B cell (primary cell): ENCODE measurements at regions of chr14 and their contacts with region 1.

Region 1: DNA sequence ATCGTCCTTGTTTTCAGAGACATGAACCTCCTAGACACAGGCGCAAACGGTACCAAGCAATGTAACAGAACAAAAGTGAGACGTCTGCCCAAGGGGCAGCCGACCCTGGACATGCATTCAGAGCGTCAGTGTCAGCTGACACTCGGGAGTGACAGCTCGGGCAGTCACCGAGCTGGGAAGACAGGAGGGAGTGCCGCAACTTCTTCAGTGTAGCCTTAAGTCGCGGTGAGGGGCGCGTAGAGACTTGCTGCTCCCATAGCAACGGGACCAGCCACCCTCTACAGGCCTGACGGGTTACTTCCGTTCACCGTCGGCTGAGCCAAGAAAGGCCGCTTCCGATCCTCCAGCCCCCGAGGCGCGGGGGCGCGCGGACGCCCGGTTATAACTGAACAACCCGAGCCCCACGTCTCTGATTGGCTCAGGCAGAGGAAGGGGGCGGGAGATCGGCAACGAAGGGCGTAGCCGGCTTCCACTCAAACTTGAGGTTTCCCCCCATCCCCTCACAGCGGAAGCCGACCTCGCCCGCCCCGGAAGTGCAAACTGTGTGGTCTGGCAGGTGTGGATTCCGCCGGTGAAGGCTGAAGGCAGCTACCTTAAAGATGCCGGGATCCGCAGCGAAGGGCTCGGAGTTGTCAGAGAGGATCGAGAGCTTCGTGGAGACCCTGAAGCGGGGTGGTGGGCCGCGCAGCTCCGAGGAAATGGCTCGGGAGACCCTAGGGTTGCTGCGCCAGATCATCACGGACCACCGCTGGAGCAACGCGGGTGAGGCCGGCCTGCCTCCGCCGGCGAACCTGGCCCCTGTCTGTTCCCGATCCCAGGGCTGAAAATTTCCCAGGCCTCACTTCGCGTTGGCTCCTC is at the start of gene EIF2B2:
- DNase-seq: peak; percentile 99
- ATAC-seq: peak; percentile 97
- H3K4me3 ChIP-seq: peak within 1 kb of the TSS; percentile 62 to 92 (median 73)
- H3K4me3 Mint-ChIP-seq: peak within 1 kb of the TSS; percentile 98
- H3K27ac ChIP-seq: peak within 1 kb of the TSS; percentile 88 to 95
- H3K27ac Mint-ChIP-seq: peak within 1 kb of the TSS; percentile 88
- H3K4me1 ChIP-seq: peaks cover 17 to 19% of the 10 kb centered on the region in 2 donors
- H3K4me1 Mint-ChIP-seq: peaks cover 29% of the 10 kb centered on the region
- H3K27me3 ChIP-seq: no peaks in the 10 kb centered on the region
- H3K27me3 Mint-ChIP-seq: no peaks in the 10 kb centered on the region
- CTCF ChIP-seq: peak; percentile 23
- total RNA-seq, gene EIF2B2: 25.5 and 31.1 TPM in 2 replicates

Region 2: DNA sequence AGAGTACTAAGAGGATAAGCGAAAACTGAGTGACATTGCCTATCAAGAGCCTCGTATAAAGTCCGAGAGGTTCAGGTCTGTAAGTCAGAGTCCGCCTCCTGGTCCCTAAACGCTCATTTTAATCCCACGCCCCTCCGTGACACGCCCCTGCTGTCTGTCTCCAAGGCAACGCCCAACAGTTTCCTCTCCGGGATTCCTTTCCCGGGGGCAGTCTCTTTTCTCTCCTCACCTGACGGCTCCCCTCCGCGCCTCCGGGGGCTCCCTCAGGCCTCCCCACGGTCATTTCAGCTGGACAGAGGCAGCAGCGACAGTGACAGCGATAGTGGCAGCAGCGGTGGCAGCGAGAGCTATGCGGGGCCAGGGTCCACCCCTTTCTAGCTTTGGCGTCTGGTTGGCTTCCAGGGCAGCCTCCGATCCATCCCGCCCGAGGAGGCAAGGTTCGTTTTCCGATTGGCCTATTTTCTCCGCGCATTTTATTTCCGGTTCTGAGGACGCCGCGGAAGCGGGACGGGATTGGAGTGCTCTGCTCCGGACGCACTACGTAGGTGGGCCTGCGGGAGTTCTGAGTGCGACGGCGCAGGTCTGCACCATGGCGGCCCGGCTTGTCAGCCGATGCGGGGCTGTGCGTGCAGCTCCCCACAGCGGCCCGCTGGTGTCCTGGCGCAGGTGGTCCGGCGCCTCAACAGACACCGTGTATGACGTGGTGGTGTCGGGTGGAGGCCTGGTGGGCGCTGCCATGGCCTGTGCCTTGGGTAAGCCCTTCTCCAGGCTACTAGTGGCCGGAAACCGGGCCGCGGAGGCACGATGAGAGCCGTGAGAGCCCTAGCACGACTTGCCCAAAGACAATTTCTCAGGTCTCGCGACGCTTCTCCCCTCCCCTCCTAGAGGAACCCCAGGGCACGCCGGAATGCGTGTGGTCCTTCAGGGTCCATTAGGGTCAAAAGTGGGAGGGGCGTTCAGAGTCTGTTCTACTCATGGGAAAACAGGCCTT is 1052.6 kb before region 1 on chr14 and contains the starts of genes COQ6 and FAM161B:
- CTCF ChIA-PET with region 1: no interaction called
- POLR2A ChIA-PET with region 1: no interaction called
- intact Hi-C with region 1: loop called (anchors 10 kb)
- DNase-seq: peak; percentile 96
- ATAC-seq: peak; percentile 93
- H3K4me3 ChIP-seq: peak within 1 kb of the TSS; percentile 63 to 94 (median 89)
- H3K4me3 Mint-ChIP-seq: peak within 1 kb of the TSS; percentile 100
- H3K27ac ChIP-seq: peak within 1 kb of the TSS; percentile 78 to 96
- H3K27ac Mint-ChIP-seq: peak within 1 kb of the TSS; percentile 95
- H3K4me1 ChIP-seq: peaks cover 11 to 12% of the 10 kb centered on the region in 2 donors
- H3K4me1 Mint-ChIP-seq: peaks cover 20% of the 10 kb centered on the region
- H3K27me3 ChIP-seq: no peaks in the 10 kb centered on the region
- H3K27me3 Mint-ChIP-seq: no peaks in the 10 kb centered on the region
- CTCF ChIP-seq: peak; percentile 11
- total RNA-seq, gene COQ6: 34.1 and 38.2 TPM in 2 replicates
- total RNA-seq, gene FAM161B: 5.9 and 6.4 TPM in 2 replicates

Region 3: DNA sequence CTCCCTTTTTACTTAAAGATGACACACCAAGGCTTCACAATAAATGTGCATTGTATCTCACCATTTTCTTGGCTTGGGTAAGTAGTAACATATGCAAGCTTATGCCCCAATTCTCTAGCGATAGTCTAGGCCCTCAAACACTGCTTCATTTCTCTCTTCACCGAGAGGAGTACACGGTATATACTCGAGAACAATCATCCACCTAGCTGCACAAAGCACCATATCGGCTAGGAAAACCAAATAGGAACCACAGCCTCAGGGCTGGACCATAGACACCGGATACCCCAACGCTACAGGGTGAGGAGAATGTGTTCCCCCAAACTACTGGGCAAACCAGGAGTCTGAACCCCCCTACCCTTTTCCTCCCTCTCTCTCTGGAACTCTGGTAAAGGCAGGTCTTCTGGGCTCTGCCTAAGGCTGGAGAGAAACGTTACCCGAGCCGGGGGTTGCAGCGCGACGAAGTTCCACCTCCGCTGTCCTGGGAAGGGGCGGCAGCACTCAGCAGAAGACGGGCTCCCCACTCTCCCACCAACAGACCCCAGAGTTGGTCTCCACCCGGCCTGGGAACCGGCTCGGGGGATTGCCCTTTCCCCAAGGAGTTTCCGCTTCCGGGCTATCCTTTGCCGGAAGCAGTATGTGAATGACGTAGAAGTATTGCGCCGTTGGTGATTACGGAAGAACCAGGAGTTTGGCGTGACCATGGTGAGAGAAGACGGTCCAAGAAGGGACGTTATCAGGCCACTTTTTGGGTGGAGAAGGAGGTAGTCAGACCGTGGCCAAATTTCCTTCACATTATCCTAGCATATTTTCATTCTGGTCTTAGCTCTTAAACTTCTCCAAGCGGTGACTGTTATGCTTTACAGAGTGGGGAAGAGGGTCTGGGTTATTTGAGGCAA is 289.9 kb before region 1 on chr14 and contains the starts of genes AREL1 and FCF1:
- CTCF ChIA-PET with region 1: no interaction called
- POLR2A ChIA-PET with region 1: no interaction called
- intact Hi-C with region 1: loop called (anchors 5 kb)
- DNase-seq: peak; percentile 91
- ATAC-seq: peak; percentile 94
- H3K4me3 ChIP-seq: peak within 1 kb of the TSS; percentile 64 to 97 (median 87)
- H3K4me3 Mint-ChIP-seq: peak within 1 kb of the TSS; percentile 88
- H3K27ac ChIP-seq: peak within 1 kb of the TSS; percentile 83 to 90
- H3K27ac Mint-ChIP-seq: peak within 1 kb of the TSS; percentile 85
- H3K4me1 ChIP-seq: peaks cover 18 to 20% of the 10 kb centered on the region in 2 donors
- H3K4me1 Mint-ChIP-seq: peaks cover 38% of the 10 kb centered on the region
- H3K27me3 ChIP-seq: no peaks in the 10 kb centered on the region
- H3K27me3 Mint-ChIP-seq: no peaks in the 10 kb centered on the region
- CTCF ChIP-seq: no peak
- total RNA-seq, gene AREL1: 39.4 and 44.4 TPM in 2 replicates
- total RNA-seq, gene FCF1: 40.6 and 41.6 TPM in 2 replicates

Region 4: DNA sequence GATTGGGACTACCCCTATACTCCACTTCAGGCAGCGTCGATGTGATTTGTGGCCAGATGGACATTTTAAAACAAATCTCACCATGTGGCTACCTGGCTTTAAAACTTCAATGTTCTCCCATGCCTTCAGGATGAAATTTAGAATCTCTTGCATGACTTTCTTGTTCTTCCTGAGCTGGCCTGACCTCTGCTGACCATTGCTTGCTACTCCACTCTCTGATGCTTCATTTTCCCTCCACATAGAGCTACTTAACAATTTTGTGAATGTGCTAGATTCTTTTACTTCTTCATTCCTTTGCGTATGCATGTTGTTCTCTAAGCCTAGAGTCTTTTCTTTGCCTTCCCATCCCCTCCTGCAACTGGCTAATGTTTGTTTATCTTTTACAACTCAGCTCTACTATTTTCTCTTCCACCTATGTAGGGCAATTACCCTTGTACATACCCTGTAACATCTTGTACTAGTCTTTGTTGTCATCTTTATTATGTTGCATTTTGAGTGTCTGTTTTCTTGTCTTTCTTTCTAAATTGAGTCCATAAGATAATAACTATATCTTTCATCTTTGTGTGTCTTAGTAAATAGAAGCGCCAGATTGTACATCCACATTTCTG is 198.3 kb before region 1 on chr14:
- CTCF ChIA-PET with region 1: no interaction called
- POLR2A ChIA-PET with region 1: no interaction called
- intact Hi-C with region 1: no loop called
- DNase-seq: peak; percentile 33
- ATAC-seq: no peak
- H3K4me3 ChIP-seq: no peak overlapping the region
- H3K4me3 Mint-ChIP-seq: no peak overlapping the region
- H3K27ac ChIP-seq: no peak overlapping the region
- H3K27ac Mint-ChIP-seq: no peak overlapping the region
- H3K4me1 ChIP-seq: no peaks in the 10 kb centered on the region
- H3K4me1 Mint-ChIP-seq: no peaks in the 10 kb centered on the region
- H3K27me3 ChIP-seq: no peaks in the 10 kb centered on the region
- H3K27me3 Mint-ChIP-seq: no peaks in the 10 kb centered on the region
- CTCF ChIP-seq: peak; percentile 58

Region 5: DNA sequence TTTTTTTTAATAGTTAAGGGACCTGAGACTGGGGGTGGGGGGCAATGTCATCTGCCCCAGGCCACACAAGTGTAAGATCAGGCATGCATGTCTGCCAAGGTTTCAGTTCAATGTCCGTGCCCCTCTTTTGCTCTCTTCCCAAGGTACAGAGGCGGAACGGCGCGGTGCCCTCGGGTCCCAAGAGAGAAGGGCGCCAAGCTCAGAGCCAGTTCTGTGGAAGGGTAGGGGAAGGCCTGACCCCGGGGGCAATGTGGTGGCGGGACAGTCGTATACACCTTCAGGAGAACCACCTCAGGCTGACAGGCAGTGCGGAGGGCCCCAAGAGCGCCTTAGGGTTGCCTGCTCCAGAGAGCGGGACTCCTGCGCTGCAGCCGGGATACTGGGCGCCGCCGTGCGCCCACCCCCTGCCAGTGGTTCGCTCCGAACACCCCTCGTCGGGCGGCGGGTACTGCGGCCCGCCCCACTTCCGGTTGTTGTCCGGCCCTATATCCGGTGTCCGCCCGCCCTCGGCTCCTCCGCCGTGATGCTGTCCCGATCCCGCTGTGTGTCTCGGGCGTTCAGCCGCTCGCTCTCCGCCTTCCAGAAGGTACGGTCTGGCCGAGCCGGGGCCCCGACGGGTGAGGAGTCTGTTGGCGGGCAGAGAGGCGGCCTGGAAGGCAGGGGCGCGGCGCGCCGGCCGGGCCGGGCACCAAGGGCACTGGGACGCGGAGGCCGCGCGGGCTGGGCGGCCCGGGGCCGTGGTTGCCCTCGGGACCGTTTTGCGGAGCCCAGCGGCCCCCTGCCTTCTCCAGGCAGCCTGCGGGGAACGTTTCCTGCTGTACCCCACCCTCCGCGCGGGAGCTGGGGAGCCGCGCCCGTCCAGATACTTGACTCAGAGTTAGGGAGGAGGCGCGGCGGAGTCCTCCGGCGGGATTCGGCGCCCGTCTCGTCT is 120.9 kb before region 1 on chr14 and contains the start of gene DLST:
- CTCF ChIA-PET with region 1: no interaction called
- POLR2A ChIA-PET with region 1: no interaction called
- intact Hi-C with region 1: loop called (anchors 1 kb)
- DNase-seq: peak; percentile 93
- ATAC-seq: peak; percentile 83
- H3K4me3 ChIP-seq: peak within 1 kb of the TSS; percentile 76 to 94 (median 79)
- H3K4me3 Mint-ChIP-seq: peak within 1 kb of the TSS; percentile 100
- H3K27ac ChIP-seq: peak within 1 kb of the TSS; percentile 80 to 89
- H3K27ac Mint-ChIP-seq: peak within 1 kb of the TSS; percentile 99
- H3K4me1 ChIP-seq: peaks cover 29 to 33% of the 10 kb centered on the region in 2 donors
- H3K4me1 Mint-ChIP-seq: peaks cover 57% of the 10 kb centered on the region
- H3K27me3 ChIP-seq: no peaks in the 10 kb centered on the region
- H3K27me3 Mint-ChIP-seq: no peaks in the 10 kb centered on the region
- CTCF ChIP-seq: no peak
- total RNA-seq, gene DLST: 89.5 and 100 TPM in 2 replicates

Region 6: DNA sequence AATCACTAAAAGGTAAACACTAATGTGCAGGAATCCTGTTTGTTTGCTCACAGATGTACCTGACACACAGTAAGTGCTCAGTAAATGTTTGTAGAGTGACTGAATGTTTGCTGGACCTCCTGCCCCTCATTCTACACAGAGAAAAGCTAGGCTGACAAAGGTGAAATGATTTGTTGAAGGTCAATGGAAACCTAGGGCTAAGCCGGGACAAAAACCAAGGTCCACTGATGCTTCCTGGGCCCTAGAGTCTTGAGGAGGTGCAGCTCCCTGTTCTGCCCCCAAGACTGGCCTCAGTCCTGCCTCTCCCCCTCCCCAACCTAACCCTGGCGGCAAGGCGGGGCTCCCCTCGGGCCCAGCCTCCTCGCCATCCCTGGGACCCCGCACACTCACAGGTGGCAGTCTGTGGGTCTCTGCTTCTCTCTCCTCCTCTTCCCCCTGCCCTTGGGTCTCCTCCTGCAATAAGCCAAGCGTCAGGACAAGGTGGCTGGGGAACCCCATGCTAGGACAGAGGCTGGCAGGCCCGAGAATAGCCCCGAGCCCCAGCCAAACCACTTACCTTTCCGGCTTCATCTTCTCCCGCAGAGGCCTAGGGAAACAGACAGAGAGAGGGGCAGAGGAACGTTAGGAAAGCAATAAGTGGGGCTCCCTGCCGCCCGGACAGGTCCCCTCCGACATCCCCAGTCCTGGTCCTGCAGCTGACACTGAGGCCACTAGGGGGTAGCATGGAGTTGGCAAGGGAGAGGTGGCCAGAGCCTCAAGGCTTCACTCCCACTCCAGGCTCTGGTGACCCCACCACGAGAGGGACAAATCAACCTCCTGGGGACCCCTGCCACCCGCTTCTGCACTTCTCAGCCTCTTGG is 56.6 kb before region 1 on chr14:
- CTCF ChIA-PET with region 1: interaction called, 3 read pairs
- POLR2A ChIA-PET with region 1: interaction called, 4 read pairs
- intact Hi-C with region 1: loop called (anchors 1 kb)
- DNase-seq: peak; percentile 80
- ATAC-seq: peak; percentile 71
- H3K4me3 ChIP-seq: no peak overlapping the region
- H3K4me3 Mint-ChIP-seq: peak overlapping the region; percentile 32
- H3K27ac ChIP-seq: no peak overlapping the region
- H3K27ac Mint-ChIP-seq: peak overlapping the region; percentile 72
- H3K4me1 ChIP-seq: peaks cover 31 to 35% of the 10 kb centered on the region in 2 donors
- H3K4me1 Mint-ChIP-seq: peaks cover 34% of the 10 kb centered on the region
- H3K27me3 ChIP-seq: no peaks in the 10 kb centered on the region
- H3K27me3 Mint-ChIP-seq: no peaks in the 10 kb centered on the region
- CTCF ChIP-seq: peak; percentile 97

Region 7: GRCh38 chr14:75050852-75051554 is 48.4 kb after region 1 on chr14 and contains the start of gene MLH3:
- CTCF ChIA-PET with region 1: no interaction called
- POLR2A ChIA-PET with region 1: no interaction called
- intact Hi-C with region 1: loop called (anchors 1 kb)
- DNase-seq: peak; percentile 90
- ATAC-seq: peak; percentile 83
- H3K4me3 ChIP-seq: peak within 1 kb of the TSS; percentile 44 to 82 (median 64)
- H3K4me3 Mint-ChIP-seq: peak within 1 kb of the TSS; percentile 97
- H3K27ac ChIP-seq: peak within 1 kb of the TSS in 1 of 2 donors; percentile 83
- H3K27ac Mint-ChIP-seq: peak within 1 kb of the TSS; percentile 96
- H3K4me1 ChIP-seq: peaks cover 9 to 10% of the 10 kb centered on the region in 2 donors
- H3K4me1 Mint-ChIP-seq: peaks cover 19% of the 10 kb centered on the region
- H3K27me3 ChIP-seq: no peaks in the 10 kb centered on the region
- H3K27me3 Mint-ChIP-seq: no peaks in the 10 kb centered on the region
- CTCF ChIP-seq: no peak
- total RNA-seq, gene MLH3: 19.9 and 28.2 TPM in 2 replicates

Region 8: GRCh38 chr14:75176142-75176820 is 173.7 kb after region 1 on chr14 and contains the start of gene TMED10:
- CTCF ChIA-PET with region 1: no interaction called
- POLR2A ChIA-PET with region 1: no interaction called
- intact Hi-C with region 1: loop called (anchors 1 kb)
- DNase-seq: peak; percentile 97
- ATAC-seq: peak; percentile 74
- H3K4me3 ChIP-seq: peak within 1 kb of the TSS; percentile 82 to 99 (median 91)
- H3K4me3 Mint-ChIP-seq: peak within 1 kb of the TSS; percentile 92
- H3K27ac ChIP-seq: peak within 1 kb of the TSS; percentile 97 to 99
- H3K27ac Mint-ChIP-seq: peak within 1 kb of the TSS; percentile 97
- H3K4me1 ChIP-seq: peaks cover 17 to 22% of the 10 kb centered on the region in 2 donors
- H3K4me1 Mint-ChIP-seq: peaks cover 32% of the 10 kb centered on the region
- H3K27me3 ChIP-seq: no peaks in the 10 kb centered on the region
- H3K27me3 Mint-ChIP-seq: no peaks in the 10 kb centered on the region
- CTCF ChIP-seq: no peak
- total RNA-seq, gene TMED10: 111 and 119 TPM in 2 replicates

Region 9: DNA sequence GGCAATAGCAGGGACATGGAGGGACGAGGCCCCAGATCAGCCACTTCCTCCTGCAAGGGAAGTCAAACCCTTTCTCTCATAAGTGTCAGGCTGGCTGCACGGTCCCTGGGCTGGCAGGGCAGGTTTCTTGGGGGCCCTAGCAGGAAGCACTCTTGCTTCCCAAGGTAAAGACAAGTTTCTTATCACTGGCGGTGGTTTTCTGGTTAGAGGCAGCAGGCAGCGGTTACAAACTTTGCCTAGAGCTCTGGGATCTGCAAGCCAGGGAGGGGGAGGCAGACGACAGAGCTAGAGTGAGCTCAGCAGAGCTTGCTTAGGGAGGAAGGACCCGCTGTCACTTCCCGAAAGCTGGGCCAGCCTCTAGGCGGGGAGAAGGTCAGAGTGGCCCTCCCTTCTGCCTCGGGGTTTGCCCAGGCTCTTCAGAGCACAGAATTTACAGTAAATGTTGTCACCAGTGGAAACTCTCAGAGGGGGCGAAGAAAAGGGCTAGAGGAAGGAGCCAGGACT is 540.0 kb after region 1 on chr14:
- CTCF ChIA-PET with region 1: no interaction called
- POLR2A ChIA-PET with region 1: no interaction called
- intact Hi-C with region 1: no loop called
- DNase-seq: peak; percentile 83
- ATAC-seq: peak; percentile 79
- H3K4me3 ChIP-seq: peak overlapping the region; percentile 7 to 54 (median 34)
- H3K4me3 Mint-ChIP-seq: peak overlapping the region; percentile 78
- H3K27ac ChIP-seq: peak overlapping the region; percentile 61 to 88
- H3K27ac Mint-ChIP-seq: peak overlapping the region; percentile 94
- H3K4me1 ChIP-seq: peaks cover 34 to 52% of the 10 kb centered on the region in 2 donors
- H3K4me1 Mint-ChIP-seq: peaks cover 50% of the 10 kb centered on the region
- H3K27me3 ChIP-seq: no peaks in the 10 kb centered on the region
- H3K27me3 Mint-ChIP-seq: no peaks in the 10 kb centered on the region
- CTCF ChIP-seq: no peak